K562 (cell line): ENCODE measurements at regions of chr1 and their contacts with region 1.

Region 1: GRCh38 chr1:111161843-111162487 is 21.9 kb downstream of the CEPT1 start:
- DNase-seq: peak; percentile 19 to 79 (median 44)
- ATAC-seq: peak; percentile 92
- H3K4me3 ChIP-seq: no peak overlapping the region
- H3K27ac ChIP-seq: no peak overlapping the region
- H3K4me1 ChIP-seq: peaks cover 0 to 3% of the 10 kb centered on the region in 2 experiments; a peak in 3 of 5 replicates
- H3K27me3 ChIP-seq: no peaks in the 10 kb centered on the region
- CTCF ChIP-seq: no peak
- EP300 ChIP-seq: peak; percentile 98
- POLR2A ChIP-seq: no peak
- RAD21 ChIP-seq: peak; percentile 33

Region 2: GRCh38 chr1:111110197-111110899 is 51.6 kb before region 1 on chr1:
- CTCF ChIA-PET with region 1: no interaction called
- POLR2A ChIA-PET with region 1: no interaction called
- in situ Hi-C with region 1: no loop called
- intact Hi-C with region 1: no loop called
- DNase-seq: no peak
- ATAC-seq: no peak
- H3K4me3 ChIP-seq: no peak overlapping the region
- H3K27ac ChIP-seq: no peak overlapping the region
- H3K4me1 ChIP-seq: no peaks in the 10 kb centered on the region
- H3K27me3 ChIP-seq: no peaks in the 10 kb centered on the region
- CTCF ChIP-seq: no peak
- EP300 ChIP-seq: no peak
- POLR2A ChIP-seq: no peak
- RAD21 ChIP-seq: no peak

Region 3: DNA sequence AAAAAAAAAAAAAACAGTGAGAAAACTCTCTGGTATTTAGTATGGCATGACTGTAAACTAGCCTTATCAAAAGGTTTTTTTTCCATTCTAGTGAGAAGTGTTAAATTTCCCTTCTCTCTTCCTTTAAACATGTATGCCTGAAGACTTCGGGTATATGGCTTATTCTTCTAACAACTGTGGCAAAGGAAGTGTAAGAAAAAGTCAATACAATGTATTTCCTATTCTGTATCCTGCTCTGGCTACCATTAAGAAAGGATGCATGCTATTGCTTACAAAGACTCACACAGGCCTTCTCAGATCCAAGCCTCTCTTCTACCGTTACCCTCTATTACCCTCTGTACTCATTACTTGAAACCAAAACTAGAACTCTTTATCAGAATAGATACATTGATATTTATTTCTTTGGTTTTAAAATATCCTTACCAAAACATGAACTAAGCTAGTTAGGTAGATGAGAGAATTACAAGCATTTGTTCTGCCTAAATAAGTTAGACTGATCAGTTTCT is 13.5 kb before region 1 on chr1:
- CTCF ChIA-PET with region 1: no interaction called
- POLR2A ChIA-PET with region 1: interaction called, 20 read pairs
- in situ Hi-C with region 1: no loop called
- intact Hi-C with region 1: no loop called
- DNase-seq: no peak
- ATAC-seq: no peak
- H3K4me3 ChIP-seq: no peak overlapping the region
- H3K27ac ChIP-seq: no peak overlapping the region
- H3K4me1 ChIP-seq: no peaks in the 10 kb centered on the region
- H3K27me3 ChIP-seq: no peaks in the 10 kb centered on the region
- CTCF ChIP-seq: no peak
- EP300 ChIP-seq: no peak
- POLR2A ChIP-seq: no peak
- RAD21 ChIP-seq: no peak